ENCODE measurements at regions of chr5 and their contacts with region 1.

Region 1: DNA sequence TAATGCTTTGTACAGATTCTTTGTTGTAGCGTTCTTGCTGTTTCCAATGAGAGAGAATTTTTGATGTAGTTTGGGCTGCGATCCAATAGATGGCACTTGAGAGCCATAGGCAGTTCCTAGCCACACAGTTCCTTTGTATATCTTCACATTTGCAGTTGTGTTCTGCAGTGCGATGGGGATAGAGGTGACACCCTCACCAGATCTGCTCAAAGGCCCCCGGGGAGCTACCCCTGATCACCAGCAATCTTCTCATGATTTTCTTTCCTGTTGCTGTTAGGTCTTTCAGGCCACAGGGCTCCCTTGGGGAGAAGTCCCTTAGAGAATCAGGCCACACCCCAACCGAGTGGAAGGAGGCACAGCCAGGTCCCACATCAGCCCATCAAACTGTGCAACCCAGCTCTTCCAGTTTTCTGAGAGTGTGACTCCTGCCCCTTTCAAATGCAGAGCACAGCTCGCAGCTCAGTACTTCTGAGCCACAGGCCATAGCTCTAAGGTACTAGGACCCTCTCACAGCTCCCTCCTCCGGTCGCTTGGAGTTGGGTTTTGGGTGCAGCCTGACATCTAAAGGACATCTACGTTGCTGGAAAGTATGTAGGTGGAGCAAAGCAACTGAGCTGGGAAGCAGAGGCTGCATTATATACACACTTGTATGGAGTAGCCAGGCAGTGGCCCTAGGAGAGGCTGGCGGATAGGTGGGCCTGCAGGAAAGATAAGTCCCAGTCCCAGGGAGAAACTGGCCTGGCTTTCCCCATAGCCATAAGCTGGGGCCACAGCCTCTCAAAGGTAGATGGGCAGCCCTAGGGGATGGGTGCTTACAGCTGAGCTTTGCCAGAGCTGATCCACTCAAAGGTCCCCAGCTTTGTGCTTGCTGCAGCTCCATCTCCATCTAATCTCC is 353.5 kb downstream of the SLCO4C1 start:
- DNase-seq: no peak
- ATAC-seq: peak; percentile 54
- H3K4me3 Mint-ChIP-seq: no peak overlapping the region
- H3K27ac Mint-ChIP-seq: no peak overlapping the region
- H3K4me1 Mint-ChIP-seq: peaks cover 4% of the 10 kb centered on the region
- H3K27me3 Mint-ChIP-seq: no peaks in the 10 kb centered on the region
- CTCF ChIP-seq: no peak

Region 2: GRCh38 chr5:101590384-101590783 is 352.2 kb before region 1 on chr5:
- CTCF ChIA-PET with region 1: no interaction called
- POLR2A ChIA-PET with region 1: no interaction called
- intact Hi-C with region 1: no loop called
- DNase-seq: no peak
- ATAC-seq: no peak
- H3K4me3 Mint-ChIP-seq: no peak overlapping the region
- H3K27ac Mint-ChIP-seq: no peak overlapping the region
- H3K4me1 Mint-ChIP-seq: no peaks in the 10 kb centered on the region
- H3K27me3 Mint-ChIP-seq: no peaks in the 10 kb centered on the region
- CTCF ChIP-seq: no peak

Region 3: DNA sequence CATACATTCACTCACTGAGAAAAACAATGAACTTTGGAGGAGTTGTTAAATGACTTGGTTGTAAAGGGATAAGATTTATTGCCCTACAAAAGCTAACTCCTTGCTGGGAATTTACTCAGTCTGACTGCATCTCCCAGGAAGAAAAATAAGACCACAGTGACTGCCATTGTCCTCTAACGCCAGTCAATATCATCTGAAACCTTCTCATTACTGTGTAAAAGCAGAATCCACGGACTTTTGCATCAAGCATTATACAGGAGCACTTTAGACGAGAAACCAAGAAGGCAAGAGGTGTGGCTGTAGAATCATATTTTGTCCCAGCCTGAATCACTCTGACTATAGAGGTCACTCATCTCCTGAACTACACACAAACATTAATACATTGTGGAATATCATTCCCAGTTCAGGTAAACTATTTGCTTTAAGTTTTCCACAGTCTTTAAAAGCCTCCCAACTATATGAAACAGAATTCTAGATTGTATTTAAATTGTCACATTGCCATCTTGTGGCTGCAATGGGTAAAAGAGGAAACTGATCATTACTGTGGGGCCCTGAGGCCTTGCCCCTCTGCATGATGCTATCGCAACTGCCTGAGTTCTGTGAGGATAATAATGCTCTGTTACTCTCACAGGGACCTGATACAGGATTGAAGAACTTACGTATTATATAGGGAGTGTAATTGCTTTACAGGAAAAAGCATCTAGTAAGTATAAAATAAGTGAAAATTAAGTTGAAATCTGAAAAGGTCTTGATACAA is 210.6 kb after region 1 on chr5:
- CTCF ChIA-PET with region 1: no interaction called
- POLR2A ChIA-PET with region 1: no interaction called
- intact Hi-C with region 1: loop called (anchors 1 kb)
- DNase-seq: no peak
- ATAC-seq: peak; percentile 65
- H3K4me3 Mint-ChIP-seq: no peak overlapping the region
- H3K27ac Mint-ChIP-seq: no peak overlapping the region
- H3K4me1 Mint-ChIP-seq: peaks cover 2% of the 10 kb centered on the region
- H3K27me3 Mint-ChIP-seq: no peaks in the 10 kb centered on the region
- CTCF ChIP-seq: no peak

Region 4: GRCh38 chr5:102277144-102277543 is 334.6 kb after region 1 on chr5:
- CTCF ChIA-PET with region 1: no interaction called
- POLR2A ChIA-PET with region 1: no interaction called
- intact Hi-C with region 1: no loop called
- DNase-seq: no peak
- ATAC-seq: no peak
- H3K4me3 Mint-ChIP-seq: no peak overlapping the region
- H3K27ac Mint-ChIP-seq: no peak overlapping the region
- H3K4me1 Mint-ChIP-seq: peaks cover 4% of the 10 kb centered on the region
- H3K27me3 Mint-ChIP-seq: peaks cover 4% of the 10 kb centered on the region
- CTCF ChIP-seq: no peak